ENCODE measurements at regions of chr12 and their contacts with region 1.

Region 1: DNA sequence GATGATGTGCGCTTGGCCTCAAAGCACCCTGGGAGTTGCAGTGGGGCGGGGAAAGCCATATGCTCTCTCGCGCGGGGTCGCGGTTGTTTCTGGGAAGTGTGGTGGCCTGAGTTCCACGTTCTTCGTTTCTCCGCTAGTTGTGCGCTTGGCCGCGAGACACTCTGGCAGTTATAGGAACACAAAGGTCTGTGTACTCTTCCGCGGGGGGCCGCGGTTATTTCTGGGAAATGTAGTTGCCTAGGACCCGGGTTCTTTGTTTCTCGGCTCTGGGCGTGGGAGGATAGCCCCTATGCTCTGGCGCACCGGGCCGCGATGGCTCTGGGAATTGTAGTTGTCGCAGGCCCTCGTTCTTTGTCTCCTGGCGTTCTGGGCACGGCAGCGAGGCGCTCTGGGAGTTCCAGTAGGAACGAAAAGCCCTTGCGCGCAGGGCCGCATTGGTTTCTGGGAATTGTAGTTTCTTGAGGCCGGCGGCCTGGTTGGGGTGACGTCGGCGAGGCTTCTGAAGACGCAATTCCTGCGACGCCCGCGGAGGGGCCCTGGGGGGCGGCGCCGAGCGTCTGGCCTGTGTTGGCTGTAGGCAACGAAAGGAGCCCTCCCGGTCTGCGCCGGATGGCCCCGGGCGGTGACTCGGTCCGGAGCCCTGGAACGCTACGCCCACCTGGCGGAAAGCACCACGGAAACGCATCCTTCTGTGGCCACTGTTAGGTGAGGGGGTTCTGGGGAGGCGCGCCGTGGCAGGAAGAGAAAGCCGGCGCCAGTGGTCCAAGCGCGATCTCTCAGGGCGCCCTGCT is at the start of gene ZNF140:
- DNase-seq: peak; percentile 95 to 99 (median 98)

Region 2: GRCh38 chr12:132739600-132740312 is 340.8 kb before region 1 on chr12:
- intact Hi-C with region 1: no loop called
- DNase-seq: no peak

Region 3: DNA sequence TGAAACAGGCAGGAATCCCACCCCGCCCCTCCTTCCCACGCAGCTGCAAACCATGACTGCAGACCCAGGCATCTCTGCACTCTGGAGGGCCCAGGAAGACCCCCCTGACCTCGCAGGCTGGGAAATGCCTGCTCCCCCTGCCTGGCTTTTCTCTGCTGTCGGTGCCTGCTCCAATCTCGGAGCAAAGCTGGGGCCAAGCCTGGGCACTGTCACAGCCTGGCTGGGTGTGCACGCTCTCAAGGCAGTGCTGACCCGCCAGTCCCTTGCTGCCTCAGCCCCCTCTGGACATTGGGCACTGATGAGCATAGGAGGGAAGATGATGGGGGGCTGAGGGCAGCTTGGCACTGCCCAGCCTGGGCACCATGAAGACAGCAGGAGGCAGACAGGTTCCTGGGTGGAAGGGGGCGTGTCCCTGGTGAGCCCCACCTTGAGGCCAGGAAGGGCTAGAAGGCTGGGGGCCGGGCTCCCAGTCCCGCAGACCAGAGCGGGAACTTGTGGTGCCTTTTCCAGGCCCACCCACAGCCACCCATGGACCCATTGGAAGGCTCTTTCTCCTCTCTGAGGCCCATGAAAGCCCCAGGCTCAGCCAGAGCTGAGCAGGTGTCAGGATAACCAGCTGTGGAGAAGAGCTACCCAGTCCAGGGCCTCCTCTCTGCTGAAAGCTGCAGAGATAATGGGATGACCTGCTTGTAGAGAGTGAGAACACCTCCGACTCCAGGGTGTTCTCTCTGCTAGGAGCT is 113.7 kb before region 1 on chr12:
- intact Hi-C with region 1: no loop called
- DNase-seq: peak in 2 of 42 donors; percentile 2 to 22

Region 4: GRCh38 chr12:132986001-132986912 is 94.3 kb before region 1 on chr12 and contains the start of gene ZNF26:
- intact Hi-C with region 1: loop called (anchors 1 kb)
- DNase-seq: peak; percentile 84 to 97 (median 93)

Region 5: GRCh38 chr12:133037207-133038005 is 43.2 kb before region 1 on chr12 and contains the start of gene ZNF84:
- intact Hi-C with region 1: loop called (anchors 1 kb)
- DNase-seq: peak; percentile 87 to 98 (median 94)

Region 6: GRCh38 chr12:133106253-133106652 is 25.7 kb after region 1 on chr12:
- intact Hi-C with region 1: no loop called
- DNase-seq: no peak

Region 7: DNA sequence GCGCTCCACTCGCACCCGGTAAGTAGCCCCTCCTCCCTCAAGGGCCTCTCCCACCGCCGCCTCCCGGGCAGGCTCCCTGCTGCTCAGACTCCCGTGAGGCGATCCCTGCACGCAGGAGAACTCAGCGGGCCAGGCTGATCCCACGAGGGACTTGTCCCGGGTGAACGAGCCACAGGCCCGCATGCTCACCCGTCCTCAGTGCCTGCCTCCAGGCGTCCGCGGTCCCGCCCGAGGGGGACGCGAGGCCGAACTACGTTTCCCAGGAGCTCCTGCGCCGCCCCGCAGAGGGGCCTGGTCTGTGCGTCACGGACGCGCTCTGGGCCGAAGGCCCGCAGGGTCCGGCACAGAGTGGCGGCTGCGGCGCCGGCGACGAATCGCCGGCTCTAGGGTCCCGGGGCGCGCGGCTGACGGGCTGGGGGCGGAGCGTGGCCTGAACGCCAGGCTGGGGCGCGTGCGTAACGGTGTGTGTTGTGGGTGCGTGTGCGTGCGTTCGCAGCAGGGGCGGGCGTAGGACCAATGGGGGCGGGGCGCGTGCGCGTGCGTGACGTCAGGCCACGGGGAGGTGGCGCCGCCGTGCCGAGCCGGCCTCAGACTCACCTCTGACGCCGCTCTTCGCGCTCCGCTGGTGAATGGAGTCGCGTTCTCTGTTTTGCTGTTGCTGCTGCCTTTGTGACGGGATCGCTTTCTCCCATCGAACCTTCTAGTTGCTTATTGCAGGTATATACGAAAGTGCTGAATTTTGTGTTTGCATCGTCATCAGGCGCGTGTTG is 49.7 kb after region 1 on chr12 and contains the starts of genes ZNF10 and ZNF891:
- intact Hi-C with region 1: loop called (anchors 5 kb)
- DNase-seq: peak; percentile 89 to 98 (median 96)

Region 8: DNA sequence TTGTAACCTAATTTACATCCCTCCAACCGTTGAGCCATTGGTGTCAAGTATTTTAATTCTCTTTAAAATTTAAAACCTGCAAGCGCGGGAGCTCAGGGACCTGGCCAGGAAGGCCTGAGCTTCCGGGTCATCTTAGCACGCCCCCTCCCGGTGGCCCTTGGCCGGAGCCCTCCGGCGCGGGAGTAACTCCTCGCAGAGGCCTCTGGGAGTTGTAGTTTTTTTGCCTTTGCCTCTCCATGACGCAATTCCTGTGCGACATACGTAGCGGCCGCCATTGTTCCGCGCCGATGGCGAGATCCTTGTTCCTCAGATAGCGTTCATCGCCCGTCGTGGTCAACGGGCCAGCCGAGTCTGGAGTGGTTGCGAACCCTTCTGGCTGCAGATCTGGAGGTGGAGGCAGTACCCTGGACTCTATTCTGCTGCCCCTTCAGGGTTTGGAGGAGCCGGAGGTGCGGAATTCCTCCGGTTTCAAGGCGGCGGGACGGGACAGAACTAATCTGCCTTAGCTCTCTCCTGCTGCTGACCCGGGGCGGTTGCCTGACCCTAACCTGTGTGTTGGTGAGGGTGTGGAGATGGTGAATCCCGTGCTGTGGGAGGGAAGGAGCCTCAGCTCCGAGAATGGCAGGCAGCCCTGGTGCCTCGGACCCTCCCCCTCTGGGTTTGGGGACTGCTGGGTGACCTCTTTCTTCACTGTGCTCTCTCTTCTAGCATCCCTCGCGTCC is 100.8 kb after region 1 on chr12 and contains the start of gene ZNF268:
- intact Hi-C with region 1: loop called (anchors 1 kb)
- DNase-seq: peak; percentile 80 to 96 (median 90)

Measured in head of caudate nucleus (tissue), 42 donors.